Kidney (tissue), 22 donors: ENCODE measurements at regions of chr7 and their contacts with region 1.

Region 1: GRCh38 chr7:148967032-148967372 is 61.3 kb downstream of the PDIA4 start:
- DNase-seq: no peak
- H3K4me3 ChIP-seq: peak overlapping the region in 1 of 3 donors; percentile 64
- H3K27ac ChIP-seq: no peak overlapping the region
- H3K4me1 ChIP-seq: peaks cover 0 to 4% (median 0%) of the 10 kb centered on the region in 3 donors
- H3K27me3 ChIP-seq: no peaks in the 10 kb centered on the region
- CTCF ChIP-seq: no peak

Region 2: DNA sequence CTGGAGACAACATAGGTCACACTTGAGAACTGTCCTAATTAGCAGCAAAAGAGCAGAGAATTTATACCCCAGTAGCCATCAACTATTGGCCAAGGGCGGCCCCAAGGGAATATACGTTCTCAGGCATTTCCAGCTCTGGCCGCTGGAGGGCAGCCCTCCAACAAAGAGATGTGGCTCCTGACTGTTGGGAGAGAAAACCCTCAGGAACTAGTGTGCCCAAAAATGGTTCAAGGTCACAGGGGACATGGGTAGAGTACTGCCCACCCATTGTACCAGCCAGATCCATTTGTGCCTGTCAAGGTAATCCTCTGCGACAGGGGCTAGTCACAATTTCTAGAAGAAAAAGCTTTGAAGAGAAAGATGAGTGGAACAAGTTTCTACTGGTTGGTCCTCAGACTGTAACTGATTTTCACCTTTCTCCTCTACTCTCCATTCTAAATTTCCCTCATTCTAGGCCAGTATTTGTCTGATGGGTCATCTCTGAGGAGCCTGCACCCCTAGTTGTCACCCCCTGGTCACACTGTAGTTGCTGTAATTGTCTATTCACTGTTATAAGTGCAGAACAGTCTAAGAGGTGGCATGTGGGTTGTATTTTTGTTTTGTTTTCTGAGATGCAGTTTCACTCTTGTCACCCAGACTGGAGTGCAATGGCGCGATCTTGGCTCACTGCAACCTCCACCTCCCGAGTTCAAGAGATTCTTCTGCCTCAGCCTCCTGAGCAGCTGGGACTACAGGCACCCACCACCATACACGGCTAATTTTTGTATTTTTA is 391.2 kb before region 1 on chr7:
- intact Hi-C with region 1: loop called (anchors 5 kb)
- DNase-seq: peak; percentile 58 to 78 (median 66)
- H3K4me3 ChIP-seq: no peak overlapping the region
- H3K27ac ChIP-seq: no peak overlapping the region
- H3K4me1 ChIP-seq: no peaks in the 10 kb centered on the region
- H3K27me3 ChIP-seq: no peaks in the 10 kb centered on the region
- CTCF ChIP-seq: peak; percentile 79

Region 3: DNA sequence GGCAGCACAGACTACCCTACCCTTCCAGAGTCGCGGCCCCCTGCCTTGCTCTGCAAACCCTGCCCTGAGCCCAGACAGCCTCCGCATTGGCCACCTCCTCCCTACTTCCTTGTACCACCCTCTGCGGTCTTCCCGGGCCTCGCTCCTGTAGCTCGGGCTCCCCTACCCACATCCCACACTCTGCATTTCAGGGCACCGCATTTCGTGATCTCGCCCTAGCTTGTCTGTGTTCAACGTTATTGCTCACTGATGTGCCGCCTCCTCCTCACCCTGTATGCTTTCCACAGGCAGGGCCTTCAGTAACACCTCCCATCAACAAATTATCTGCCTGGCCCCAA is 54.7 kb after region 1 on chr7:
- intact Hi-C with region 1: no loop called
- DNase-seq: no peak
- H3K4me3 ChIP-seq: no peak overlapping the region
- H3K27ac ChIP-seq: no peak overlapping the region
- H3K4me1 ChIP-seq: no peaks in the 10 kb centered on the region
- H3K27me3 ChIP-seq: no peaks in the 10 kb centered on the region
- CTCF ChIP-seq: no peak